Activated B cell treated with CpG ODN at 0.5 μM for 24 hours (primary cell): ENCODE measurements at regions of chr1 and their contacts with region 1.

Region 1: GRCh38 chr1:212665241-212666115 is 34.2 kb downstream of the BATF3 start:
- DNase-seq: peak; percentile 80
- ATAC-seq: peak; percentile 94
- H3K4me3 Mint-ChIP-seq: peak overlapping the region; percentile 82
- H3K27ac Mint-ChIP-seq: peak overlapping the region; percentile 53
- H3K4me1 Mint-ChIP-seq: peaks cover 17% of the 10 kb centered on the region
- H3K27me3 Mint-ChIP-seq: no peaks in the 10 kb centered on the region
- CTCF ChIP-seq: peak; percentile 61

Region 2: DNA sequence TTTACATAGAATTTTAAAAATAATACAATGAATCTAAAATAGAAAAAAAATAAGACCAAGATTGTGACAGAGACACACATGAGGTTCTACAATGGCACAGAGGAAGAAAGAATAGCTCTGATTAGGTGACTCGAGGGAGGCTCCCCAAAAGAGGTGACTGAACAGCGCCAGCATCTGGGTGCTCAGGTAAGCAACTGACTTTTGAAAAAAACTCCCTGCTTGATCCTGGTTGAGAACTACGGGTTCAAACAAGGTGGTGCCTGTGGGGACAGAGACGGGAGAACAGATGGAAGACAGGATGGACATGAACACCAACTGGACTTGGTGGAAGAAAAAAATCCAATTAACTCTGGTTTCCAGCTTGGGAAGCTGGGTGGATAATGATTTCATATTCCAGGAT is 11.7 kb after region 1 on chr1:
- CTCF ChIA-PET with region 1: interaction called, 11 read pairs
- POLR2A ChIA-PET with region 1: interaction called, 3 read pairs
- intact Hi-C with region 1: no loop called
- DNase-seq: no peak
- ATAC-seq: no peak
- H3K4me3 Mint-ChIP-seq: no peak overlapping the region
- H3K27ac Mint-ChIP-seq: peak overlapping the region; percentile 35
- H3K4me1 Mint-ChIP-seq: peaks cover 31% of the 10 kb centered on the region
- H3K27me3 Mint-ChIP-seq: peaks cover 4% of the 10 kb centered on the region
- CTCF ChIP-seq: no peak

Region 3: GRCh38 chr1:212760126-212760823 is 94.8 kb after region 1 on chr1:
- CTCF ChIA-PET with region 1: interaction called, 14 read pairs
- POLR2A ChIA-PET with region 1: no interaction called
- intact Hi-C with region 1: loop called (anchors 1 kb)
- DNase-seq: no peak
- ATAC-seq: peak; percentile 84
- H3K4me3 Mint-ChIP-seq: no peak overlapping the region
- H3K27ac Mint-ChIP-seq: no peak overlapping the region
- H3K4me1 Mint-ChIP-seq: peaks cover 7% of the 10 kb centered on the region
- H3K27me3 Mint-ChIP-seq: no peaks in the 10 kb centered on the region
- CTCF ChIP-seq: no peak

Region 4: DNA sequence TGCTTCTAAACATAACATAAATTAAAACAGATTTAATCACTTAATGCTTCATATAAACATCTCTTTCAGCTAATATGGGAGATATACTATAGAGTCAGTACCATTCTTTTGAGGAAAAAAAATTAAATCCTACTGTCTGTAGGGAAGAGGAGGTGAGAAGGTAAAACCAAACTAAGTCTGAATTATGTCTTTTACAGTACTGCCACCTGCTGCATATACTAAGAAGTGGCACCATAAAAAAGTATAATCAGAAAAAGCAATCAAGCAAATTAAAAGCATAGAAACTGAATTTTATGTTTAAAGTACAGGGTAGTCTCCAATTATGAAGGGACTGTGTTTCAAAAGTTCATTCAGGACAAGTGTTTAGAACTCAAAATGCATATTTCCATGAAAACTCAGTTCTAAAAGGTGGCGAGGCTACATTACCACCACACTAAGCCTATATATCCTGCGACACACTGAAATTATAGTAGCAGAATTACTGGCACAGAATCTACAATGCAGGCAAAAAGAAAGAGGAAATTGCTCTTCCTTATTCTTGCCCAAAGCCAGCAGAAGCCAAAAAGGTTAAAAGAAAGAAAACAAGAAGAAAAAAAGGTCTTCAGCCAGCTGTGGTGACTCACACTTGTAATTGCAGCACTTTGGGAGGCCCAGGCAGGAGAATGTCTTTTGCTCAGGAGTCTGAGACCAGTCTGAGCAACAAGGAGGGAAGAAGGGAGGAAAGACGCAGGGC is 117.1 kb after region 1 on chr1:
- CTCF ChIA-PET with region 1: interaction called, 95 read pairs
- POLR2A ChIA-PET with region 1: interaction called, 3 read pairs
- intact Hi-C with region 1: loop called (anchors 1 kb)
- DNase-seq: no peak
- ATAC-seq: peak; percentile 66
- H3K4me3 Mint-ChIP-seq: no peak overlapping the region
- H3K27ac Mint-ChIP-seq: no peak overlapping the region
- H3K4me1 Mint-ChIP-seq: peaks cover 2% of the 10 kb centered on the region
- H3K27me3 Mint-ChIP-seq: no peaks in the 10 kb centered on the region
- CTCF ChIP-seq: peak; percentile 80